ENCODE measurements at regions of chr19 and their contacts with region 1.

Region 1: DNA sequence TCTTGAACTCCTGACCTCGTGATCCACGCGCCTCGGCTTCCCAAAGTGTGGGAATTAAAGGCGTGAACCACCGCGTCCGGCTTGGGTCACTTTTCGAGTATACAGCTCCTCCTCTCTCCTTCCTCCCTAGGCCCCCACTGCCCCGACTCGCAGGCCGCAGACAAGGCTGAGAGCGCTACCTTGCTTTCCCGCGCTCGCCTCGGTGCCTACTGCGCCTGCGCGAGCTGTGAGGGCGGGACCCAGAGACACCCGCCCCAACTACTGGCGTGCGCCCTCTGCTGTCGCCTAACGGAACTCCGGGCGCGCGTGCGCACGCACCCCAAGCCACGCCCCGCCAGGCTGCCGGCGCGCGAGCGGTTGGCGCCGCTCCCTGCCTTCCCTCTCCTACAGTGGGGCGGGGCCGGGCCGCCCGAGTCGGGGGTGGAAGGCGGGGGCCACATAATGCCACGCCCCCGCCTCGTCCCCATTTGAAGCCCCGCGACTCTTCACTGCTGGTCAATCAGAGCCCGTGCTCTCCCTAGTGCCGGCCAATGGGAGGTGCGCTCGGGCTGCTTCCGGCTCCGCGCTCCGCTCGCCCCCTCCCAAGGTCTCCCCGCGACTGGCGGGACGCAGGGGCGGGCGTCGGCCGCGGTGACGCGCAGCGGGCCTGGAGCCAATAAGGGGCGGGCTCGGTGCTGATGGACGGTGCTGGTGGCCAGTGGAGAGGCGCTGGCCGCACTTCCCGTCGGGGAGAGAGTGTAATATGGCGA is at the start of gene RAB8A:
- DNase-seq: peak; percentile 99
- H3K4me3 ChIP-seq: peak within 1 kb of the TSS; percentile 79 to 94 (median 86)
- H3K27ac ChIP-seq: peak within 1 kb of the TSS; percentile 89 to 95 (median 94)
- H3K4me1 ChIP-seq: peaks cover 23 to 52% (median 50%) of the 10 kb centered on the region in 4 donors
- H3K27me3 ChIP-seq: no peaks in the 10 kb centered on the region
- CTCF ChIP-seq: peak; percentile 99 to 100 (median 100)
- EP300 ChIP-seq: no peak
- POLR2A ChIP-seq: no peak
- total RNA-seq, gene RAB8A: 37.9 to 56.4 (median 42.9) TPM

Region 2: DNA sequence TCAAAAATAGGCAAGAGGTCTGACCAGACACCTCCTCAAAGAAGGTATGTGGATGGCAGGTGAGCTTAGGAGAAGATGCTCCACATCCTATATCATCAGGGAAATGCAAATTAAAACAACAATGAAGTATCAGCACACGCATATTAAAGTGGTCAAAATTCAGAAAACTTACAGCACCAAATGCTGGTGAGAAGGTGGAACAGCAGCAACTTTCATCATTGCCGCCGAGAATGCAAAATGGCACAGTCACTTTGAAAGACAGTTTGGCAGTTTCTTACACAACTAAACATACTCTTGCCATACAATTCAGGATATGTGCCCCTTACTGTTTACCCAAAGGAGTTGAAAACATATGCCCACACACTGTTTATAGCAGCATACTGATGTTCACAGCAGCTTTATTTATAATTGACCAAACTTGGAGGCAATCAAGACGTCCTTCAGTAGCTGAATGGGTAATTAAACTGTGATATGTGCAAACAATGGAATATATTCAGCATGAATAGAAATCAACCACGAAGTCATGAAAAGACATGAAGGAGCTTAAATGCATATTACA is 140.0 kb before region 1 on chr19:
- intact Hi-C with region 1: no loop called
- DNase-seq: no peak
- H3K4me3 ChIP-seq: no peak overlapping the region
- H3K27ac ChIP-seq: no peak overlapping the region
- H3K4me1 ChIP-seq: no peaks in the 10 kb centered on the region
- H3K27me3 ChIP-seq: peaks cover 0 to 20% (median 0%) of the 10 kb centered on the region in 4 donors
- CTCF ChIP-seq: no peak
- EP300 ChIP-seq: no peak
- POLR2A ChIP-seq: no peak

Region 3: DNA sequence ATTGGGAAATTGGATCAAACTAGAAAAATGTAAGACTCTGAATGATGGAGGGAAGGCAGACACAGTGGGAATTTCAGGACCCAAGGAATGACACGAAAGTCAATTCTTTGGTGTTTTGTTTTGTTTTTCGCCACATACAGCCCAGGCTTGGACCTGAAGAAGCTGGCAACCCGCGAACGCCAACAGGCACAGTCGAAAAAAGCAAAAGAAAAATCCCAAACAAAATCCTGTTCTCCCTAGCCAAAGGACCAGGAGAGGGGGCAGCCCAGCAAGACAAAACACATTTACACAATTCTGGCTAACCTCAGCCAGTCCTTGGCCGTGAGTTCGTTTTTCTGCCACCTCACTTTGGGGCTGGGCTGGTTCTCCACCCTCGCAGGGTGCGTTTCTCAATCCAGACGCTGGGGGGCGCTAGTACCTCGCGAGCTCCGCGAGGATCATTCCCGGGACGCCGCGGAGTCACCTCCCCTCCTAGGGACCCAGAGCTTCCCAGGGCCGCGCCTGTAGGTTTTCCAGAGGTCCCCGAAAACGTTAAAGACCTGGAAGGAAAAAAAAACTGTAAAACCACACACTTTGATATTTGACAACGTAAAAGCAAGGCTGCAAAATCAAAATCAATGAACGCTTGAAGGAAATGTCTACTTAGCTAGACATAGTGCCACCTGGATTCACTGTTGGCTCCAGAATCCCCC is 69.9 kb before region 1 on chr19:
- intact Hi-C with region 1: loop called (anchors 5 kb)
- DNase-seq: no peak
- H3K4me3 ChIP-seq: peak overlapping the region; percentile 20 to 47 (median 30)
- H3K27ac ChIP-seq: peak overlapping the region; percentile 30 to 45 (median 35)
- H3K4me1 ChIP-seq: peaks cover 7 to 10% (median 9%) of the 10 kb centered on the region in 4 donors
- H3K27me3 ChIP-seq: peaks cover 0 to 4% (median 0%) of the 10 kb centered on the region in 4 donors
- CTCF ChIP-seq: peak in 2 of 3 experiments; percentile 98 to 99
- EP300 ChIP-seq: no peak
- POLR2A ChIP-seq: no peak

Region 4: DNA sequence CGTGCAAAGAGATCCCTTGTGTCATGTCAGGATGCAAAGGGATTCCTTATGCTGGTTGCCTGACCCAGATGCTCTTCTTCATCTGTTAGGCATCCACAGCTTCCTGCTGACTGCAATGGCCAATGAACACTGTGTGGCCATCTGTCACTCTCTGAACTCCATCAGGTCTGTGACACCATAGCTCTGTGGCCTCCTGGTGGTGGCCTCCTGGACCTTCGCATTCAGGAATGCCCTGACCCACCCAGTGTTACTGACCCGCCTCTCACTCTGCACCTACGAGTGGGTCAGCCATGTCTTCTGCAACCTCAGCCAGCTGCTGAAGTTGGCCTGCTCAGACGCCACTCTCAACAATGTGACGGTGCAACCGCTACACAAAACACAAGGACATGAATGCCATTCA is 59.0 kb before region 1 on chr19:
- intact Hi-C with region 1: no loop called
- DNase-seq: no peak
- H3K4me3 ChIP-seq: no peak overlapping the region
- H3K27ac ChIP-seq: no peak overlapping the region
- H3K4me1 ChIP-seq: no peaks in the 10 kb centered on the region
- H3K27me3 ChIP-seq: no peaks in the 10 kb centered on the region
- CTCF ChIP-seq: no peak
- EP300 ChIP-seq: no peak
- POLR2A ChIP-seq: no peak

Region 5: DNA sequence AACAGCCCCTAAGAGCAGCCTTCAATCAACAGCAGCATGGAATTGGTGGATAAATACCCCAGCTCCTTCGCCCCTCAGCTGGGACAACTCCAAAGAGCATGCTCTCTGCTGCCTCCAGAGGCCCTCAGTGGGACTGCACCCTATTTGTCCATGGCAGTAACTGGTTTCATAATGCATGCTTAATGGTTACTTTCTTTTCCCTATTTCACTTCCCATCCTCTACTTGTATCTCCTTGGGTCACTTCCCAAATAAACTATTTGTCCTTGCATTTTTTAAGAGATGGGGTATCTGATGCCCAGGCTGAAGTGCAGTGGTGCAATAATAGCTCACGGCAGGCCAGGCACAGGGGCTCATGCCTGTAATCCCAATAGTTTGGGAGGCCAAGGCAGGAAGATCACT is 48.5 kb before region 1 on chr19:
- intact Hi-C with region 1: loop called (anchors 5 kb)
- DNase-seq: no peak
- H3K4me3 ChIP-seq: no peak overlapping the region
- H3K27ac ChIP-seq: no peak overlapping the region
- H3K4me1 ChIP-seq: peaks cover 14 to 42% (median 28%) of the 10 kb centered on the region in 4 donors
- H3K27me3 ChIP-seq: no peaks in the 10 kb centered on the region
- CTCF ChIP-seq: peak; percentile 59 to 87 (median 62)
- EP300 ChIP-seq: no peak
- POLR2A ChIP-seq: no peak

Region 6: GRCh38 chr19:16161848-16162247 is 50.5 kb after region 1 on chr19:
- intact Hi-C with region 1: no loop called
- DNase-seq: no peak
- H3K4me3 ChIP-seq: no peak overlapping the region
- H3K27ac ChIP-seq: no peak overlapping the region
- H3K4me1 ChIP-seq: no peaks in the 10 kb centered on the region
- H3K27me3 ChIP-seq: no peaks in the 10 kb centered on the region
- CTCF ChIP-seq: no peak
- EP300 ChIP-seq: no peak
- POLR2A ChIP-seq: no peak

Region 7: GRCh38 chr19:16185123-16185767 is 73.9 kb after region 1 on chr19 and contains the start of gene FAM32A:
- intact Hi-C with region 1: loop called (anchors 5 kb)
- DNase-seq: peak; percentile 100
- H3K4me3 ChIP-seq: peak within 1 kb of the TSS; percentile 76 to 93 (median 82)
- H3K27ac ChIP-seq: peak within 1 kb of the TSS; percentile 78 to 91 (median 84)
- H3K4me1 ChIP-seq: peaks cover 17 to 51% (median 45%) of the 10 kb centered on the region in 4 donors
- H3K27me3 ChIP-seq: peaks cover 0 to 10% (median 0%) of the 10 kb centered on the region in 4 donors
- CTCF ChIP-seq: peak; percentile 28 to 53 (median 46)
- EP300 ChIP-seq: no peak
- POLR2A ChIP-seq: no peak
- total RNA-seq, gene FAM32A: 83.5 to 104 (median 103) TPM

Measured in esophagus muscularis mucosa (tissue), 4 donors.